Tibial artery (tissue), 4 donors: ENCODE measurements at regions of chr11 and their contacts with region 1.

Region 1: GRCh38 chr11:18526521-18527296 is at the start of gene TSG101:
- DNase-seq: peak; percentile 94 to 95
- H3K4me3 ChIP-seq: peak within 1 kb of the TSS; percentile 84 to 95
- H3K27ac ChIP-seq: peak within 1 kb of the TSS; percentile 92 to 93
- H3K4me1 ChIP-seq: peaks cover 0 to 37% (median 11%) of the 10 kb centered on the region in 4 donors
- H3K27me3 ChIP-seq: no peaks in the 10 kb centered on the region
- CTCF ChIP-seq: no peak

Region 2: DNA sequence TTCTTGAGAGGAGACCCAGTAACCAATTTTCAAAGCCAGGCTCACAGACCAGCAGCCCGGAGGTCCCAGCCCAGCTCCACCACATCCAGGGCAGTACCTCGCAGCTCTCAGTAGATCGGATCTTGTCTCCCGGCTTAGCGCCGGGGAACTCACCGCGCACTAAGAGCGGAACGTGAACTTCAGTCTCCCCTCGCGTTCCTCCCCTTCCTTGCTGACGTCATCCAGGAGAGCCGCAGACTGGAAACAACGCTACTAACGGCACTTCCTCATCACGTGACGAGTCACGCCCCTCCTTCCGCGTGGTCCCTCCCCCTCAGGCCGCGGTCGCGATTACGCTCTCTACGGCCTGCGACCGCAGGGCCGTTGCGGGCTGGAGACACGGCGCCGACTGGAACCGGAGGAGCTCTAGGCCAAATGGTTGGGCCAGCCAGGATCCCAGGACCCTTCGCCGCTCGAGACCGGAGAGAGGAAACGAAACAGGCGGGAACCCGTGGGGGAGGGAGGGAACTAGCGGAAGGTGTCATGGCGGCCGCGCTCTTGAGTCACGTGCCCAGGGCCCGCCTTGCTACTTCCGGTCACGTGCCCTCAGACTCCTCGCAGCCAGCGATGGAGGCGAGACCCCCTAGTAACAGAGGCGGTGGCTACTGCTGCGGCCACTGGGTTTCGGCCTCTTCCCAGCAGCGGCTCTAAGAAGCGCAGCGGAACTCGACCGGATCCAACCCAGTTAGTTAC is 204.6 kb before region 1 on chr11 and contains the starts of genes GTF2H1 and HPS5:
- intact Hi-C with region 1: loop called (anchors 2 kb)
- DNase-seq: peak; percentile 96 to 97
- H3K4me3 ChIP-seq: peak within 1 kb of the TSS; percentile 81 to 91
- H3K27ac ChIP-seq: peak within 1 kb of the TSS; percentile 94 to 97
- H3K4me1 ChIP-seq: peaks cover 0 to 61% (median 40%) of the 10 kb centered on the region in 4 donors
- H3K27me3 ChIP-seq: no peaks in the 10 kb centered on the region
- CTCF ChIP-seq: no peak

Region 3: DNA sequence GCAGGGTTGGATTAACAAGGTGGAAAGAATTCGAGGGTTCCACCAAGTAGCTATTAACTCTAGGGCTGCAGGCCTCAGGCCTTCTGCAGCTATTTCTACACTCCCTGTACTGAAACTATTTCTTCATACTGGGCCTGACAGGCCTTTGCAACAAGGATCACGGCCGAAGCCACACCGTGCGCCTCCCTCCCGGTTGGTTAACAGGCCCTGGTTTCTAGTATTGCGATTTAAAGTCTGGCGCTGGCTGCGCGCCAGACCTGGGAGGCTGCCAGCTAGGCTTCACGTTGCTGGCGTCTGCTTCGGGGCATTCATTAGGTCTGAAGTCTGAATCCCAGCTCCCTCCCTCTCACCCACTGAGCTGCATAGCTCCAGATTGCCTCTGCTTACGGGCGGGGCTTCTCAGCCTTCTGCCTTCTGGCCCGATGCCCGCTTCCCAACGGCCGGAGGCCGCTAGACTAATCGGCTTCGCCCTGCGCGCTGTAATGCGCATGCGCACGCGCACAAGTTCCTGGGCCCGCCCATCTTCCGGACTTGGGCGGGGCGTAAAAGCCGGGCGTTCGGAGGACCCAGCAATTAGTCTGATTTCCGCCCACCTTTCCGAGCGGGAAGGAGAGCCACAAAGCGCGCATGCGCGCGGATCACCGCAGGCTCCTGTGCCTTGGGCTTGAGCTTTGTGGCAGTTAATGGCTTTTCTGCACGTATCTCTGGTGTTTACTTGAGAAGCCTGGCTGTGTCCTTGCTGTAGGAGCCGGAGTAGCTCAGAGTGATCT is 130.8 kb before region 1 on chr11:
- intact Hi-C with region 1: loop called (anchors 10 kb)
- DNase-seq: peak; percentile 98 to 99
- H3K4me3 ChIP-seq: peak overlapping the region; percentile 90 to 97
- H3K27ac ChIP-seq: peak overlapping the region; percentile 97 to 99
- H3K4me1 ChIP-seq: peaks cover 0 to 45% (median 27%) of the 10 kb centered on the region in 4 donors
- H3K27me3 ChIP-seq: no peaks in the 10 kb centered on the region
- CTCF ChIP-seq: no peak